ENCODE measurements at regions of chr5 and their contacts with region 1.

Region 1: DNA sequence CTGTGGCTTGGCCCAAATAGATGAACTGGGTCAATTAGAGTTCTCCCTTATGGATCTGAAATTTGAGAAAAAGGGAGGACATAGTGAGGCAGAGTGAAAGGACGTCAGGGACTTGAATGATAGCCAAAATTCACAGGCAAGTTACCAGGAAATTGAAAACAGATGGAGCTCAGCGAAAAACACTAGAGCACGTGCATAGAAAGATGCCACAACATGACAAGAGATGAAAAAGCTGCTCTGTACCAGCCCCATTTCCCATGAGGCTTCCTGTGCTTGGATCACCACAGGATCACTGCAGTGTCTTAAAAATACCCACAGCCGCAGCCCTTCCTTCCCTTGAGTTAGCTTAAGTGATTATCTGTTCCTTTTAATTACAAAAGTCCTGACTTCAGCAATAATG is 39.0 kb upstream of the HOMER1 start:
- DNase-seq: peak in 5 of 35 experiments; percentile 2 to 27 (median 4)
- ATAC-seq: peak in 3 of 4 experiments; percentile 35 to 82 (median 36)
- H3K4me3 ChIP-seq: no peak overlapping the region
- H3K4me3 Mint-ChIP-seq: no peak overlapping the region
- H3K27ac ChIP-seq: no peak overlapping the region
- H3K27ac Mint-ChIP-seq: no peak overlapping the region
- H3K4me1 ChIP-seq: peaks cover 3 to 7% of the 10 kb centered on the region in 2 experiments
- H3K4me1 Mint-ChIP-seq: peaks cover 8 to 15% (median 13%) of the 10 kb centered on the region in 3 donors
- H3K27me3 ChIP-seq: no peaks in the 10 kb centered on the region
- H3K27me3 Mint-ChIP-seq: no peaks in the 10 kb centered on the region

Region 2: DNA sequence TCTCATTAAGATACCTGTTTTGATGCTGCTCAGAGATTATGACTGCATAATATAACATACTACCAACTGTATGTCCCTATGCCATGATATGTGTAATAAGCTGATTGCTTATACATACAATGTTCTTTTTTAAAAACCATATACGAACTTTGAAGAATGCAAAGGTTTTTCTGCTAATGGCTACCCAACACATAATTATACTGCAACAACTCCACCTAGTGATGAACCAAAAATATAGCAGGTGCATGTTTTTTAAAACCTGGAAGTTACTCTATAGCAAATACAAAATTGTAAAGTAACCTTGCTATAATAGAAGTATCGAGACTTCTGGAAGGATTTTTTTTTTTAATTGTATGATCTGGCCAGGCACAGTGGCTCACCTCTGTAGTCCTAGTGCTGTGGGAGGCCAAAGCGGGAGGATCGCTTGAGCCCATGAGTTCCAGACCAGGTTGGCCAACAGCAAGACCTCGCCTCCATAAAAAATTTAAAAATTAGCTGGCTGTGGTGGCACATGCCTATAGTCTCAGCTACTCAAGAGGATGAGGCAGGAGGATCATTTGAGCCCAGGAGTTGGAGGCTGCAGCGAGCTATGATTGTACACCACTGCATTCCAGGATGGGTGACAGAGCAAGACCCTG is 88.2 kb before region 1 on chr5:
- CTCF ChIA-PET with region 1: no interaction called
- POLR2A ChIA-PET with region 1: interaction called in 1 of 2 experiments, 12 read pairs
- DNase-seq: peak in 1 of 35 experiments; percentile 38
- ATAC-seq: peak in 1 of 4 experiments; percentile 45
- H3K4me3 ChIP-seq: no peak overlapping the region
- H3K4me3 Mint-ChIP-seq: no peak overlapping the region
- H3K27ac ChIP-seq: no peak overlapping the region
- H3K27ac Mint-ChIP-seq: no peak overlapping the region
- H3K4me1 ChIP-seq: no peaks in the 10 kb centered on the region
- H3K4me1 Mint-ChIP-seq: peaks cover 2 to 5% (median 2%) of the 10 kb centered on the region in 3 donors
- H3K27me3 ChIP-seq: no peaks in the 10 kb centered on the region
- H3K27me3 Mint-ChIP-seq: peaks cover 0 to 3% of the 10 kb centered on the region in 2 donors

Measured in T-cell (primary cell).